ENCODE measurements at regions of chr14 and their contacts with region 1.

Region 1: DNA sequence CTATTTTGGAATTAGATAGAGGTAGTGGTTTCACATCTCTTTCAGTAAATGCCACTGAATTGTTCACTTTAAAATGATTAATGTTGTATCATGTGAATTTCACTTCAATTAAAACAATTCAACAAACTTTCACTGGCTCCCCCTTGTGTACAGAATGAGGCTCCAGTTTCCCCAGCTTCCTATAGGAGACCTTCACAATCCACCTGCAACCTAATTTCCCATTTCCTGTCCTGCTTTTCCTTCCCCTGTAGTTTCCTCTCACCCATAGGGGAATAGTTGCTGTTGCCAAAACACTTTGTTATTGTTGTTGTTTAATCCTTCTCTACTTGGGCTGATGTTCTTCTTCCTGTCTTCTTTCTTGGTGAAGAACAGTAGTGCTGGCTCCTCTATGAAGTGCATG is 59.8 kb downstream of the NPAS3 start:
- DNase-seq: no peak
- ATAC-seq: peak; percentile 36

Region 2: DNA sequence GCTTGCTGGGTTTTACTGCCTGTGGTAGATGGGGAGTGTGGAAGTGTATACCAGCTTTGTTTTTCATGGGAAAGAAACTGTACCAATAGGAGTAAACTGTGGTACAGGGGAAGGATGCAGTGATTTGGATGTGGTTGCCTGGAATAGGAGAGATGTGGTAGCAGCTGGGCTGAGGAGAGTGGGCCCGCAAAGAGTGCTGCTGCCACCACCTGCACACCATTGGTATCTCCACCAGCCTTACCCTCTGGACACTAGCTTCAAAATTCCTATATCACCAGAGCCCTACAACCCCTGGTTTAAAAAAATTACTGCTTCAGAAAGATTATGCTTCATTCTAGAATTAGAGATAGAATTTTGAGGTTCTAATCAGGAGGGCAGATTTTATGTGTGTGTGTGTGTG is 615.7 kb before region 1 on chr14:
- intact Hi-C with region 1: no loop called
- DNase-seq: no peak
- ATAC-seq: peak; percentile 81

Region 3: DNA sequence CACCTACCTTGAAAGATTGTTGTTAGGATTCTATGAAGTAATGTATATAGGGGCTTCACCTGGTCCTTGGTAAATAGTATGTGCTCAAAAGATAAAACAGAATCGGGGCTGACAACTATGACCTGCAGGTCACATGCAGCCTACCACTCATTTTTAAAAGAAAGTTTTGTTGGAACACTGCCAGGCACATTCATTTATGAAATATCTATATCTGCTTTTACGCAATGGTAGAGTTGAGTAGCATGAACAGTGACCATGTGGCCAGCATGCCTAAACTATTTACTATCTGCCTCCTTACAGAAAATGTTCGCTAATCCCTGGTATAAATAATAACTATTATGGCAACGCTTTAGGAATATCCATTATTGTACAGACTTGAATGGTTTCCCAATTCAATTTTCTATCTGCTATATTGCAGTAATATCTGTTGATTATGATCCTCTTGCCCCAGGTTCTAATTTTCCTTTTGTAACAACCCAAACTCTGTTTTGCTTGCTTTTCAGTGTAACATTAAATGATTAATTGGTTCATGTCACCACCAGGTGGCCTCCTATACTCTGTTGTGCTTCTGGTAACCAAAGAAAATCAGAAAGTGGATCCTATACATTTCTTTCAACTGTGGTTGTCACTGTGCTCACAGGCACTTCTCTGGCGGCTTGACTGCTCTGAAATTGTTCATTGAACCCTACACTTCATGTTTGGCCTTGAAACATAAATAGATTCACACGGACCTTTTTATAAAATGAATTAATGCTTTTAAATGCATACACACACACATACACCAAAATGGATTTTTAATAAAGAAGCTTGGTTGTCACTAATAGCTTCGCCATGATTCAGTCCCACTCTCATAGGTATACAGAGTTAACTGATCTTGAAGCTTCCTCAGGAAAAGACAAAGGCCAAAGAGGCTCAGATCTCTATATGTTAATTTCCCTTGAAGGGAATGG is 287.4 kb before region 1 on chr14:
- intact Hi-C with region 1: loop called (anchors 5 kb)
- DNase-seq: no peak
- ATAC-seq: peak; percentile 16

Region 4: GRCh38 chr14:33194551-33194950 is 196.1 kb after region 1 on chr14:
- intact Hi-C with region 1: no loop called
- DNase-seq: no peak
- ATAC-seq: no peak